Dendritic cell treated with granulocyte-macrophage colony-stimulating factor and Interleukin-4, amounts not matched to agents 40 ng/mL and 50 ng/mL, for 4 days (primary cell): ENCODE measurements at regions of chr2 and their contacts with region 1.

Region 1: GRCh38 chr2:55150834-55151233 is 81.3 kb downstream of the CLHC1 start:
- H3K4me3 Mint-ChIP-seq: no peak overlapping the region
- H3K27ac Mint-ChIP-seq: peak overlapping the region; percentile 41
- H3K4me1 Mint-ChIP-seq: peaks cover 63% of the 10 kb centered on the region
- H3K27me3 Mint-ChIP-seq: no peaks in the 10 kb centered on the region

Region 2: GRCh38 chr2:55101466-55101865 is 49.4 kb before region 1 on chr2:
- intact Hi-C with region 1: no loop called
- H3K4me3 Mint-ChIP-seq: no peak overlapping the region
- H3K27ac Mint-ChIP-seq: no peak overlapping the region
- H3K4me1 Mint-ChIP-seq: peaks cover 35% of the 10 kb centered on the region
- H3K27me3 Mint-ChIP-seq: no peaks in the 10 kb centered on the region

Region 3: GRCh38 chr2:55111570-55112228 is 39.1 kb before region 1 on chr2:
- intact Hi-C with region 1: loop called (anchors 5 kb)
- H3K4me3 Mint-ChIP-seq: peak overlapping the region; percentile 36
- H3K27ac Mint-ChIP-seq: peak overlapping the region; percentile 92
- H3K4me1 Mint-ChIP-seq: peaks cover 48% of the 10 kb centered on the region
- H3K27me3 Mint-ChIP-seq: no peaks in the 10 kb centered on the region